Right ventricle myocardium inferior (tissue), 1 donor: ENCODE measurements at regions of chr7 and their contacts with region 1.

Region 1: GRCh38 chr7:27774717-27775328 is 34.9 kb downstream of the TAX1BP1 start:
- DNase-seq: no peak
- ATAC-seq: no peak

Region 2: DNA sequence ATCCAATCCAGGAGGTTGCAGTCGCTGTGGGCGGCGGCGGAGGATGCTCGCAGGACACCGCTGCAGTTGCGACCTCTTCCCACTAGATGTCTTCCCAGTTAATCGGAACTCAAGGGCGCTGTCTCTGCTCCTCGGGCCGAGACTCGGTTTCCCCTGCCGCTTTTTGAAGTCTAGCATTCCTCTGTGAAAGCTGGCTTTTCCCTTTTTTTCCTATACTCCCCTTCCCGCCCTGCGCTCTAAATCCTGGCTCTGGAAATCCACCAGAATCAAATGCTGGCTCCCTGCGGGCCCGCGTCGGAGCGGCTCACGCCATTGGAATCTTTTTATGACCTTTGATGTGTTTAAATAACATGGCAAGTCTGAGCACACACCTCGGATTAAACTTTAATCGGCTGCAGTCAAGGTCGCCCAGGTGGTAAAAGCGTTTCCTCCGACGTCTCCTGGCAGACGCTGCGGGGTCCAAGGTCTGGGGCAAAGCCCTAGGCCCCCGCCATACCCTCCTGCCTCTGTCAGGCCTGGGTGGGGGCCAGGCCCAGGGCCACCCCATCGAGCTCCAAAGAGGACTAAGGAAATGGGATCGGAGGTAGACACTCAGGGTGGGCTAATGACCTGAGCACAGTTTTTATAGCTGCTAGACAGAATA is 564.3 kb before region 1 on chr7:
- intact Hi-C with region 1: loop called (anchors 10 kb)
- DNase-seq: no peak
- ATAC-seq: peak; percentile 59

Region 3: GRCh38 chr7:27593226-27593625 is 181.6 kb before region 1 on chr7:
- intact Hi-C with region 1: loop called (anchors 10 kb)
- DNase-seq: no peak
- ATAC-seq: no peak

Region 4: GRCh38 chr7:27808626-27809025 is 33.8 kb after region 1 on chr7:
- intact Hi-C with region 1: no loop called
- DNase-seq: no peak
- ATAC-seq: peak; percentile 40